Activated CD4-positive, alpha-beta T cell treated with anti-CD3 and anti-CD28 coated beads for 36 hours (primary cell): ENCODE measurements at regions of chr15 and their contacts with region 1.

Region 1: GRCh38 chr15:36874930-36875329 is 225.4 kb downstream of the MEIS2 start:
- DNase-seq: no peak
- ATAC-seq: no peak
- H3K4me3 Mint-ChIP-seq: no peak overlapping the region
- H3K27ac Mint-ChIP-seq: no peak overlapping the region
- H3K4me1 Mint-ChIP-seq: peaks cover 17% of the 10 kb centered on the region
- H3K27me3 Mint-ChIP-seq: peaks cover 37% of the 10 kb centered on the region

Region 2: DNA sequence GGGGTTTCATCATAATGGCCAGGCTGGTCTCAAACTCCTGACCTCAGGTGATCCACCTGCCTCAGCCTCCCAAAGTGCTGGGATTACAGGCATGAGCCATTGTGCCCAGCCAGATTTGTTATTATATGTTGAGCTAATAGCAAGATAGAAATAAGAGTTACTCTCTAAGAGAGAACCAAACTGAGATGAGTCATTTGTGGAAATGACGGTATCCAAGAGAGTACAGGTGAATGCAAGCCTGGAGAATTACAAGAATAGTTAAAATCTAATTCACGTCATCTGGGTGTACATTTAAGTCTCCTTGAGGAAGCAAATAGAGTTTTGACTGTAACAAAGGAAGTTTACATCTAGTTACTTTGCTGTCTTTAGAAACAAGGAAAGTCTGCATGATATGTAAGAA is 307.5 kb before region 1 on chr15:
- CTCF ChIA-PET with region 1: no interaction called
- POLR2A ChIA-PET with region 1: no interaction called
- intact Hi-C with region 1: loop called in 1 of 2 experiments (anchors 5 kb)
- DNase-seq: no peak
- ATAC-seq: no peak
- H3K4me3 Mint-ChIP-seq: no peak overlapping the region
- H3K27ac Mint-ChIP-seq: no peak overlapping the region
- H3K4me1 Mint-ChIP-seq: no peaks in the 10 kb centered on the region
- H3K27me3 Mint-ChIP-seq: peaks cover 13% of the 10 kb centered on the region